ENCODE measurements at regions of chr11 and their contacts with region 1.

Region 1: DNA sequence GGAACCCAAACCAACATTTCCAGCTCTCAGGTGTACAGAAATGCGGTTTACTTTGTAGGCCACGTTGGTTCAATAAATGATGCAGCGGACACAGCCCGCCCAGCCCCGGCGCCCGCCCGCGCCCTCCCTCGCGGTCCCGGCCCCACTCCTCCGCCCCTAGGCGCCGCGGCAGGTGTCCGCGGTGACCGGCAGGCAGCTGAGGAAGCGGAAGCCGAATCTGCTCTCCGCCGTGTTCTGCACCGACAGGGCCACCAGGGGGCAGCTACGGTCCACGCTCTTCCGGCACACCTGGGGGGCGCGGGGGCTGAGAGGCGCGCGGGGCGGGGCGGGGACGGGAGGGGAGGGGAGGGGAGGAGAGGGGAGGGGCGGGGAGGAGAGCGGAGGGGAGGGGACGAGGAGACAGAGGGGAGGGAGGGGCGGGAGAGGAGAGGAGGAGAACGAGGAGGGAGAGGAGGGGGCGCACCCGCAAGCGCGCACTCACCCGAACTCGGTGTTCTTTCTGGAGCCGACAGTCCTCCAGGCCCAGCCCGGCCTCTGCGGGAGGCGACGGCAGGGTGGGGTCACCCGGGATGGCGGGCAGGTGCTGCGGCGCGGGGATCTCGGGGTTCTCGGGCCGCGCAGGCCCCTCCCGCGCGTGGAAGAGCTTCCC is 5.6 kb downstream of the LMNTD2 start:
- DNase-seq: peak; percentile 54 to 90 (median 73)
- ATAC-seq: peak; percentile 81
- H3K4me3 ChIP-seq: peak overlapping the region; percentile 32 to 39
- H3K4me3 Mint-ChIP-seq: peak overlapping the region; percentile 56
- H3K27ac ChIP-seq: no peak overlapping the region
- H3K27ac Mint-ChIP-seq: no peak overlapping the region
- H3K4me1 ChIP-seq: peaks cover 15% of the 10 kb centered on the region
- H3K4me1 Mint-ChIP-seq: peaks cover 5% of the 10 kb centered on the region
- H3K27me3 ChIP-seq: no peaks in the 10 kb centered on the region
- H3K27me3 Mint-ChIP-seq: no peaks in the 10 kb centered on the region
- CTCF ChIP-seq: peak; percentile 51

Region 2: DNA sequence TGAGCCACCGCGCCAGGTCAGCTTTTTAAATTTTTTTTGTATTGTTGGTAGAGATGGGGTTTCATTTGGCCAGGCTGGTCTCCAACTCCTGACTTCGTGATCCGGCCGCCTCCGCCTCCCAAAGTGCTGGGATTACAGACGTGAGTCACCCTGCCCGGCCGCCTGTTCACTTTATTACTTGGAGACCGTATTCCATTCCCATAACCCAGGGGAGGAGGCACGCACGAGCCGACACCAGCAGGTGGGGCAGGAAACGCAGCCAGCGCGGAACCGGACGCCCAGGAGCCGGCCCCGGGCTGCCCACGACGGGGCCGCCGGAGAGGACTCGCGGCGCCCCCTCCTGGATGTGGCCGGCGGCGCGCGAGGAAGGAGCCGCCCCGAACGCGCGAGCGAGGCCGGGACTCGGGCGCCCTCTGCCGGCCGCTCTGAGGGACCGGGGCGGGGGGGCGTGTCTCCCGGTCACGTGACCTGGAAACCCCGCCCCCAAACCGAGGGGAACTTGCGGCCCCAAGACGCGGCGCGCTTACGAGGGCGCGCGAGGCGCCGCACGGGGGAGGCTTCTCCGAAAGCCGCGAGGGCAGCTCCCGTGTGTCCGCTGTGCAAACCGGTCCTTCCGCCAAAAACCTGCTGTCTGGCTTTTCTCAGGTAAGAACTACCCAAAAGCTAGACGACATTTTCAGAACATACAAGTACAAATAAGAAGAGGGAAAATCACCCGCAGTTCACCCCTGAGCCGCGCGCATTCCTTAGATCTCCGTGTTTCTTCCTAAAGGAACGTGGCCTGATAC is 36.3 kb before region 1 on chr11:
- CTCF ChIA-PET with region 1: interaction called, 3 read pairs
- POLR2A ChIA-PET with region 1: no interaction called
- intact Hi-C with region 1: loop called in 1 of 2 experiments (anchors 2 kb)
- DNase-seq: peak; percentile 82 to 98 (median 92)
- ATAC-seq: peak; percentile 95
- H3K4me3 ChIP-seq: peak overlapping the region; percentile 43 to 46
- H3K4me3 Mint-ChIP-seq: peak overlapping the region; percentile 79
- H3K27ac ChIP-seq: peak overlapping the region in 1 of 2 experiments; percentile 59
- H3K27ac Mint-ChIP-seq: peak overlapping the region; percentile 81
- H3K4me1 ChIP-seq: peaks cover 4% of the 10 kb centered on the region
- H3K4me1 Mint-ChIP-seq: peaks cover 5% of the 10 kb centered on the region
- H3K27me3 ChIP-seq: no peaks in the 10 kb centered on the region
- H3K27me3 Mint-ChIP-seq: no peaks in the 10 kb centered on the region
- CTCF ChIP-seq: peak; percentile 99

Region 3: DNA sequence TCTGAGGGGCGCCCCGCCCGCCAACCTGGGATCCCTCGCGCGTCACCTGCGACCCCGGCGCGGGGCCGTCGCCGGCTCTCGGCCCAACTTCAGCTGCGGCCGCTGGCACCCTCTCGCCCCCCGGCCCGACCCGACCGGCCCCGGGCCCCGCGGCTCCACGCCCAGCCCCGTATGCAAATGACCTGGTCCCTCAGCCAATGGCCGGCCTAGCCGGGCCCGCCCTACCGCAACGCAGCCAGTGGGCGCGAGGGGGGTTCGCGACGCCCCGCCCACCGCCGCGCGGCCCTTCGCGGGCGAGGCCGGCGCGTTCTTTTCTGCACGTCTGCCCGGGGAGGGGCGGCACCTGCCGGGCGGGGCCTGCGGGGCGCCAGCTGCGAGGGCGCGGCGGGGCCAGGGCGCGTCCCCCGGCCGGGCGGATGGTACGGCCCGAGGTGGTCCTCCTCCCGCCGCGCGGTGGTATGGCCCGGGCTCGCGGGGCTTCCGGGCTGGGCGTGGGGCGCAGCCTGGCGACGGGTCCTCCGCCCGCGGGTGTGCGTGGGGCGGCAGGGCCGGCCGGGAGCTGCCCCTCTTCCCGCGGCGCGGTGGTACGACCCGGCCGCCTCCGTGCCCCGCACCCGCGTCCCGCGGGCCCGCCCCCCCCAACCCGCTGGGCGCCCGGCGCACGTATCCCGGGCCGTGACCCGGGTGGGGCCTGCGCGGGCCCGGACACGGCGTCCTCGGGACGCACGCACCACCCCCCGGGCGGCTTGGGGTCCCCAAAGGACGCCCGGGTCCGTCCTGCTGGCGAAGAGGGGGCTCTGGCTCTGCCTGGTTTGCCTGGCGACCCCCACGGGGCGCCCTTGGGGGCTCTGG is 13.6 kb after region 1 on chr11:
- CTCF ChIA-PET with region 1: interaction called, 28 read pairs
- POLR2A ChIA-PET with region 1: interaction called, 11 read pairs
- intact Hi-C with region 1: loop called in 1 of 2 experiments (anchors 1 kb)
- DNase-seq: peak; percentile 82 to 97 (median 92)
- ATAC-seq: peak; percentile 92
- H3K4me3 ChIP-seq: peak overlapping the region; percentile 64 to 71
- H3K4me3 Mint-ChIP-seq: peak overlapping the region; percentile 80
- H3K27ac ChIP-seq: peak overlapping the region; percentile 45 to 68
- H3K27ac Mint-ChIP-seq: peak overlapping the region; percentile 64
- H3K4me1 ChIP-seq: peaks cover 8% of the 10 kb centered on the region
- H3K4me1 Mint-ChIP-seq: peaks cover 11% of the 10 kb centered on the region
- H3K27me3 ChIP-seq: no peaks in the 10 kb centered on the region
- H3K27me3 Mint-ChIP-seq: no peaks in the 10 kb centered on the region
- CTCF ChIP-seq: no peak

Region 4: GRCh38 chr11:587978-588380 is 33.0 kb after region 1 on chr11:
- CTCF ChIA-PET with region 1: interaction called, 12 read pairs
- POLR2A ChIA-PET with region 1: no interaction called
- intact Hi-C with region 1: loop called in 1 of 2 experiments (anchors 1 kb)
- DNase-seq: peak; percentile 42 to 95 (median 81)
- ATAC-seq: peak; percentile 95
- H3K4me3 ChIP-seq: peak overlapping the region in 1 of 2 experiments; percentile 3
- H3K4me3 Mint-ChIP-seq: peak overlapping the region; percentile 69
- H3K27ac ChIP-seq: peak overlapping the region; percentile 60 to 76
- H3K27ac Mint-ChIP-seq: peak overlapping the region; percentile 99
- H3K4me1 ChIP-seq: peaks cover 20% of the 10 kb centered on the region
- H3K4me1 Mint-ChIP-seq: peaks cover 29% of the 10 kb centered on the region
- H3K27me3 ChIP-seq: no peaks in the 10 kb centered on the region
- H3K27me3 Mint-ChIP-seq: no peaks in the 10 kb centered on the region
- CTCF ChIP-seq: no peak

Region 5: GRCh38 chr11:615504-616319 is 60.8 kb after region 1 on chr11 and contains the start of gene IRF7:
- CTCF ChIA-PET with region 1: no interaction called
- POLR2A ChIA-PET with region 1: no interaction called
- intact Hi-C with region 1: loop called (anchors 1 to 2 kb)
- DNase-seq: peak; percentile 65 to 92 (median 87)
- ATAC-seq: peak; percentile 72
- H3K4me3 ChIP-seq: peak within 1 kb of the TSS; percentile 84 to 92
- H3K4me3 Mint-ChIP-seq: peak within 1 kb of the TSS; percentile 92
- H3K27ac ChIP-seq: peak within 1 kb of the TSS; percentile 83 to 95
- H3K27ac Mint-ChIP-seq: peak within 1 kb of the TSS; percentile 94
- H3K4me1 ChIP-seq: peaks cover 30% of the 10 kb centered on the region
- H3K4me1 Mint-ChIP-seq: peaks cover 10% of the 10 kb centered on the region
- H3K27me3 ChIP-seq: no peaks in the 10 kb centered on the region
- H3K27me3 Mint-ChIP-seq: no peaks in the 10 kb centered on the region
- CTCF ChIP-seq: no peak
- total RNA-seq, gene IRF7: 102 to 106 TPM

Region 6: GRCh38 chr11:727859-728748 is 173.2 kb after region 1 on chr11:
- CTCF ChIA-PET with region 1: interaction called, 44 read pairs
- POLR2A ChIA-PET with region 1: interaction called, 5 read pairs
- intact Hi-C with region 1: loop called (anchors 1 kb)
- DNase-seq: peak; percentile 64 to 88 (median 83)
- ATAC-seq: peak; percentile 84
- H3K4me3 ChIP-seq: no peak overlapping the region
- H3K4me3 Mint-ChIP-seq: no peak overlapping the region
- H3K27ac ChIP-seq: no peak overlapping the region
- H3K27ac Mint-ChIP-seq: no peak overlapping the region
- H3K4me1 ChIP-seq: peaks cover 19% of the 10 kb centered on the region
- H3K4me1 Mint-ChIP-seq: peaks cover 10% of the 10 kb centered on the region
- H3K27me3 ChIP-seq: peaks cover 0 to 3% of the 10 kb centered on the region in 2 experiments
- H3K27me3 Mint-ChIP-seq: peaks cover 3% of the 10 kb centered on the region
- CTCF ChIP-seq: peak; percentile 94

Region 7: DNA sequence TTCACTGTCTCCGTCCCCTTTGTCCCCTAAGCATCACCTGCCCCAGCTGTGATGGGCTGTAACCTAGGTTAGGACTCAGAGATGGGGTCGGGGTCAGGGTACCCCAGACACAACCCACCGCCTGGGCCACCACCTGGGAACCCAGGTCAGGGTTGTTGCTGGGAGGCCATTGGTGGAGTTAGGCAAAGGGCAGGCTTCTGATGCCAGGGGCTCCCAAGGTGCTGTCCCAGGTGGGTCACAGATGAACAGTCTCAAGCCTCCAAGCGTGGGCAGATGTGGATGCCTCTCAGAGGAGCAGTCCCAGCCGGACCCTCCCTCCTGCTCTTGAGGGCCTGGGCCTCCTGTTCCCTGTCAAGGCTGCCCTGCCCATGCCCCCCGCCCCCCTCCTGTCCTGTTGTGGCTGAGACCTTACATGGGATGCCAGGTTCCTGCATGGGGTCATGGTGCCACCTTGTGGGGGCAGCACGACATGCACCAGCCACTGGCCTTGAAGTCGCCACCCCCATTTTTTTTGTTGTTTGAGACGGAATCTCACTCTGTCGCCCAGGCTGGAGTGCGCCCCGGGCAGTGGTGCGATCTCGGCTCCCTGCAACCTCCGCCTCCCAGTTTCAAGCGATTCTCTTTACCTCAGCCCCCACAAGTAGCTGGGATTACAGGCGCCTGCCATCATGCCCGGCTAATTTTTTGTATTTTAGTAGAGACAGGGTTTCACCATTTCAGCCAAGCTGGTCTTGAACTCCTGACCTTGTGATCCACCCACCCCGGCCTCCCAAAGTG is 210.3 kb after region 1 on chr11:
- CTCF ChIA-PET with region 1: interaction called, 6 read pairs
- POLR2A ChIA-PET with region 1: no interaction called
- intact Hi-C with region 1: loop called in 1 of 2 experiments (anchors 1 kb)
- DNase-seq: peak; percentile 41 to 80 (median 70)
- ATAC-seq: peak; percentile 94
- H3K4me3 ChIP-seq: no peak overlapping the region
- H3K4me3 Mint-ChIP-seq: no peak overlapping the region
- H3K27ac ChIP-seq: no peak overlapping the region
- H3K27ac Mint-ChIP-seq: no peak overlapping the region
- H3K4me1 ChIP-seq: no peaks in the 10 kb centered on the region
- H3K4me1 Mint-ChIP-seq: no peaks in the 10 kb centered on the region
- H3K27me3 ChIP-seq: no peaks in the 10 kb centered on the region
- H3K27me3 Mint-ChIP-seq: no peaks in the 10 kb centered on the region
- CTCF ChIP-seq: peak; percentile 63

Region 8: GRCh38 chr11:1472178-1473002 is 917.4 kb after region 1 on chr11:
- CTCF ChIA-PET with region 1: no interaction called
- POLR2A ChIA-PET with region 1: no interaction called
- intact Hi-C with region 1: no loop called
- DNase-seq: peak in 1 of 9 experiments; percentile 11
- ATAC-seq: no peak
- H3K4me3 ChIP-seq: no peak overlapping the region
- H3K4me3 Mint-ChIP-seq: no peak overlapping the region
- H3K27ac ChIP-seq: no peak overlapping the region
- H3K27ac Mint-ChIP-seq: no peak overlapping the region
- H3K4me1 ChIP-seq: no peaks in the 10 kb centered on the region
- H3K4me1 Mint-ChIP-seq: no peaks in the 10 kb centered on the region
- H3K27me3 ChIP-seq: no peaks in the 10 kb centered on the region
- H3K27me3 Mint-ChIP-seq: no peaks in the 10 kb centered on the region
- CTCF ChIP-seq: no peak